ENCODE measurements at regions of chr20 and their contacts with region 1.

Region 1: GRCh38 chr20:50399917-50400704 is 110.1 kb upstream of the PTPN1 start:
- DNase-seq: no peak
- ATAC-seq: peak; percentile 20

Region 2: GRCh38 chr20:50438986-50439407 is 38.9 kb after region 1 on chr20:
- intact Hi-C with region 1: no loop called
- DNase-seq: no peak
- ATAC-seq: no peak

Region 3: DNA sequence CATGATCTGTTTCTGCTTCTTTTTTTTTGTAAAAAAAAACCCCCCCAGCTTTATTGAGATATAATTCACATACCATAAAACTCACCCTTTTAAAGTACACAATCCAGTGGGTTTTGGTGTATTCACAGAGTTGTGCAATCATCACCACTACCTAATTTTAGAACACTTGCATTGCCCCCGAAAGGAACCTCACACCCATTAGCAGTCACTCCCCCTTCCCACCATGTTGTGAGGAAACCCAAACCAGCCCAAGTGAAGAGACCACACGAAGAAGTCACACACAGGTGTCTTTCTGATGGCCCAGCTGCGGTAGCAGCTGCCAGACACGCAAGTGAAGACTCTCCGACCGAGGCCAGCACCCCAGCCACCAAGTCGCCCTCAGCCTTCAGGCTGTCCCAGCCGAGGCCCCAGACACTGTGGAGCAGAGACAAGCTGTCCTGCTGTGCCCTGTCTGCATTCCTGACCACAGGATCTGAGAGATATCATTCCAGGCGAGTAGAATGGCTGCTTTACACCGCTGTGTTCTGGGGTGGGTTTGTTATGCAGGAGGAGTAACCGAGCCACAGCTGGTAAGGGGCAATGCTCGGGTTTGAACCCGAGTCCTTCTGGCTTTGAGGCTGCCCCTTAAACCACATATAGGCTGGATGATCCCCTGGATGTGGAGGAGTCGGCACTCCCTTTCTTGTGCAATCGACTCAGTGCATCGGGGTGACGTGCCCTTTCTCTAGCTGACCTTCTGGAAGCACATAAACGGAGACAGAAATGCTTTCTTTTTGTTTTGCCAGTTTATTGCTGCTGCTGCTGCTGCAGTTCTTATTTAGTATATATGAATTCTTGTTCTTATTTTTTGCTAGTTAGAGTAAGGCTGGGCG is 51.0 kb after region 1 on chr20:
- intact Hi-C with region 1: loop called (anchors 10 kb)
- DNase-seq: peak; percentile 58
- ATAC-seq: peak; percentile 76

Measured in left ventricle myocardium superior (tissue), 1 donor.